B cell (primary cell): ENCODE measurements at regions of chr3 and their contacts with region 1.

Region 1: GRCh38 chr3:36969540-36970432 is 23.1 kb downstream of the EPM2AIP1 start:
- DNase-seq: peak; percentile 83
- ATAC-seq: peak; percentile 98
- H3K4me3 ChIP-seq: no peak overlapping the region
- H3K4me3 Mint-ChIP-seq: peak overlapping the region; percentile 36
- H3K27ac ChIP-seq: peak overlapping the region; percentile 74 to 84
- H3K27ac Mint-ChIP-seq: peak overlapping the region; percentile 91
- H3K4me1 ChIP-seq: peaks cover 21 to 25% of the 10 kb centered on the region in 2 donors
- H3K4me1 Mint-ChIP-seq: peaks cover 26% of the 10 kb centered on the region
- H3K27me3 ChIP-seq: no peaks in the 10 kb centered on the region
- H3K27me3 Mint-ChIP-seq: no peaks in the 10 kb centered on the region
- CTCF ChIP-seq: no peak

Region 2: GRCh38 chr3:36981006-36981405 is 11.2 kb after region 1 on chr3:
- CTCF ChIA-PET with region 1: no interaction called
- POLR2A ChIA-PET with region 1: no interaction called
- intact Hi-C with region 1: loop called (anchors 1 kb)
- DNase-seq: no peak
- ATAC-seq: no peak
- H3K4me3 ChIP-seq: no peak overlapping the region
- H3K4me3 Mint-ChIP-seq: no peak overlapping the region
- H3K27ac ChIP-seq: no peak overlapping the region
- H3K27ac Mint-ChIP-seq: no peak overlapping the region
- H3K4me1 ChIP-seq: no peaks in the 10 kb centered on the region
- H3K4me1 Mint-ChIP-seq: no peaks in the 10 kb centered on the region
- H3K27me3 ChIP-seq: no peaks in the 10 kb centered on the region
- H3K27me3 Mint-ChIP-seq: no peaks in the 10 kb centered on the region
- CTCF ChIP-seq: no peak

Region 3: GRCh38 chr3:36993326-36994283 is 23.8 kb after region 1 on chr3 and contains the start of gene MLH1:
- CTCF ChIA-PET with region 1: interaction called, 6 read pairs
- POLR2A ChIA-PET with region 1: interaction called, 9 read pairs
- intact Hi-C with region 1: loop called (anchors 1 kb)
- DNase-seq: peak; percentile 100
- ATAC-seq: peak; percentile 85
- H3K4me3 ChIP-seq: peak within 1 kb of the TSS; percentile 72 to 86 (median 76)
- H3K4me3 Mint-ChIP-seq: no peak within 1 kb of the TSS
- H3K27ac ChIP-seq: peak within 1 kb of the TSS; percentile 97 to 98
- H3K27ac Mint-ChIP-seq: no peak within 1 kb of the TSS
- H3K4me1 ChIP-seq: peaks cover 39 to 46% of the 10 kb centered on the region in 2 donors
- H3K4me1 Mint-ChIP-seq: peaks cover 38% of the 10 kb centered on the region
- H3K27me3 ChIP-seq: no peaks in the 10 kb centered on the region
- H3K27me3 Mint-ChIP-seq: no peaks in the 10 kb centered on the region
- CTCF ChIP-seq: no peak
- total RNA-seq, gene MLH1: 38.5 and 46.3 TPM in 2 replicates